ENCODE measurements at regions of chr2 and their contacts with region 1.

Region 1: DNA sequence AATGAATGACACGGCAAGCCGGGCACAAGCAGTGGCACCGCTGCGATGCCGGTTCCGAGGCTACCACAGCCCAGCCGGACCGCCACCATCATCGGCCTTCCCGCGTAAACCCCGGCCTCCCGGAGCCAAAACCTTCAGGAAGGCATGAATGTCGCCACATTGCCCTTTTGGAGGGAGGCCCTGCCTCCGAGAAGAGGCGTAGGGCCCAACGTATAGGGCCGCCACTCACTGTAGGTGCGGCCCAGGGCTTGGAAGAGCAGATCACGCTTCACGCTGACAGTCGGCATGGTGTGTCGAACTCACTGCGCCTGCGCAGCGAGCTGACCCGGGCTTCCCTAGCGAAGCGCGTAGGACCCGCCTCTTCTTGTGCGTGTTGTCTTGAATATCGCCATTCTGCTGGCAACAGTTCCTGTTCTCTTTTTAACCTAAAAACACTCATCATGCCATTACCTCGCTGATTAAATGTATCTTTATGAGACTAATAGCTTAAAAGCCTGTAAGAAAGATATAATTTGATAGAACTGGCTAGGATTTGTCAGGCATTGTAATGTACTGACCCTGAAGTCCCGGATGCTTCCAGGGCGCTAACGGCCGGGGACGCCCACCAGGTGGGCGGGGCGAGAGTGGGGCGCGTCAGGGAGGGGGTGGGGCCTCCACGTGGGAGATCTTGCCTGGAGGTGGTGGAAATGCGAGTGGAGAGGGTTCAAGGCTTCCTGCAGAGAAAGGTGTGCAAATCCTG is at the start of gene FARSB:
- DNase-seq: peak; percentile 96
- ATAC-seq: peak; percentile 92
- H3K4me3 Mint-ChIP-seq: peak within 1 kb of the TSS; percentile 97
- H3K27ac Mint-ChIP-seq: peak within 1 kb of the TSS; percentile 95
- H3K4me1 Mint-ChIP-seq: peaks cover 38% of the 10 kb centered on the region
- H3K27me3 Mint-ChIP-seq: no peaks in the 10 kb centered on the region
- total RNA-seq, gene FARSB: 56.3 to 58.5 TPM

Region 2: DNA sequence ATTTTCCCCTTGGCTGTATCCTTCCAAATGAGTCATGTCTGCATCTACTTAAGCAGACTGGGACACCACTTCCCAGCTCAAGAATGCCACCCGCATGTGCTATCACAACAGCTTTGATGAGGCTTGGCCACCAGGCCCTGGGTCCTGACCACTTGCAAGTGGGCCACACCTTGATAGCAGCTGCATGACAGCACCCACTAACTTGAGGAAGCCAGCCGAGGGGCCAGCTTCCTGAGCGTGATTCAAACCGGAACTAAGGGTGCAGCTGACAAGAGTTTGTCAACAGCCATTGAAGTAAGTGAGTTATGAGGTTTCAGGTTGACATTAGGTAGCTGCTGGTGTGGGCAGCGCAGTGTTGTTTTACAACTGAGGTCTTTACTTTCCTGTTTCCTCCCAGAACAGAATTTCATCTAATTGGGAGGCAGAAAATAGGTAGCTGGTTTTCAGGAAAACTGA is 1138.2 kb before region 1 on chr2:
- CTCF ChIA-PET with region 1: no interaction called
- POLR2A ChIA-PET with region 1: no interaction called
- intact Hi-C with region 1: loop called in 1 of 2 experiments (anchors 5 kb)
- DNase-seq: peak; percentile 84
- ATAC-seq: peak; percentile 86
- H3K4me3 Mint-ChIP-seq: no peak overlapping the region
- H3K27ac Mint-ChIP-seq: no peak overlapping the region
- H3K4me1 Mint-ChIP-seq: peaks cover 13% of the 10 kb centered on the region
- H3K27me3 Mint-ChIP-seq: no peaks in the 10 kb centered on the region

Region 3: DNA sequence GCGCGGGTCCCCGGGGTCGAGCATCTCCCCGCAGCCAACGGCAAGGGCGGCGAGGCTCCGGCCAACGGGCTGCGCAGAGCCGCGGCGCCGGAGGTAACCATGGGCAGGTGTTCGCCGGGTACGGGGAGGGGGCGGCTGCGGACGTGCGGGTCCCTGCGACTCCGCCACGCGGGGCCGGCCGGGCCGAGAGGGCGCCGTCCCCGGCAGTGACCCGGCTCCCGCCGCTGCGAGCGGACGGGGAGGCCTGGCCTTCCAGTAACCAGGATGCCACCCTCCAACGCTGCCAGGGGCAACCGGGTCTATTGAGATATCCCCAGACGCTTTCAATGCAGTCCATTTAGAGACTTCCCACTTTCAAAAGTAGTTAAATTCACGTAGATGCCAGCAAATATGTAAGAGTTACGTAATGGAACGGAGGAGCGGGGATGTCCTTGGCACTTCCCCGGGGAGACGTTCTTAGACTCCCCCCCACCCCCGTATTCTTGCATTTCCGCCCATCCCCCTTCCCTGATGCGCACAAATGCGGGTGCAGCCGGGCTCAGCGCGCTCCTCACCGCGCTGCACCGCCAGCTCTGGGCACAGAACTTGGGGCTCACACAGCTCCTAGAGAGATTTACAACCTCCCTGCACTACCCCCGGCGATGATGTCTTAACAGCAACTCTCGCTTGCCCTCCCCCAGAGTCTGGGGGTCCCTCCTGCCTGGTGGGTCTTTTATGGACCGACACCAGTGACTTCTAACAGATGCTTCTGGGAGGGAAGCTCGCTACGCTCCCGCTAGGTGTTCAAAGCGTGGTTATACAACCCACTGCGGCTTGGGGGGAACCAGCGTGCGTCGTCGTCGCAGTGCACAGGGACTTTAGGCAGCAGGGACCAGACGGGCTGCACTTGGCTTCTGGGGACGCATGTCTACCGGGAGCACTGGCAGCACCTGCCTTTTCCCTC is 231.0 kb before region 1 on chr2:
- CTCF ChIA-PET with region 1: no interaction called
- POLR2A ChIA-PET with region 1: no interaction called
- intact Hi-C with region 1: loop called in 1 of 2 experiments (anchors 5 kb)
- DNase-seq: peak; percentile 62
- ATAC-seq: peak; percentile 27
- H3K4me3 Mint-ChIP-seq: peak overlapping the region; percentile 85
- H3K27ac Mint-ChIP-seq: peak overlapping the region; percentile 90
- H3K4me1 Mint-ChIP-seq: peaks cover 50% of the 10 kb centered on the region
- H3K27me3 Mint-ChIP-seq: peaks cover 42% of the 10 kb centered on the region

Region 4: DNA sequence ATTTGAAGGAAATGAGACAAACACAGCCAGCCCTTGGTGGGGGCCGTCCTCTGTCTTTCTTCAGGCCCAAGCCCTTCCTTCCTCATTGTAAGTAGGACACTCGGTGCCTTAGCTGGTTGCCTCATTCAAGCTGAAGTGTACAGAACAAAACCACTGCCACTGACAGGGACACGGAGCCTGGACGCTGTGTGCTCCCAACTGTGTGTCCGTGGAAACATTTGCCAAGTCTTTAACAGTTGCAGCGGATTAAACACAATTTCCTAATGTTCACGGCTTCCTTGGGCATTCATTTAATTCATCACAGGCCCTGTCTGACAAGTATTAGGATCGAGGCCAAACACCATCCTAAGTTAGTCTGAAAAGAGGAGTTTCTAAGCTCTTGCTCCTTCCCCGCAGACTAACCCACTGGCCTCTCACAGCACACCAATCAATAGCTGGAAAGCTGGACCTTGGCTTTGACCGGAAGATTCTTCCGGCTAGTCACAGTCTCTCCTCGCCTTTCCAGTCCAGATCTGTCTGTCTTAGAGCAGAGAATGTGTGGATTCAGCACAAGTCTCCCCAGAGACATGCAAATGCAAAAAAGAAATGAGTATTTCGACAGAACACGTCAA is 136.2 kb after region 1 on chr2:
- CTCF ChIA-PET with region 1: no interaction called
- POLR2A ChIA-PET with region 1: no interaction called
- intact Hi-C with region 1: loop called in 1 of 2 experiments (anchors 1 kb)
- DNase-seq: no peak
- ATAC-seq: no peak
- H3K4me3 Mint-ChIP-seq: no peak overlapping the region
- H3K27ac Mint-ChIP-seq: no peak overlapping the region
- H3K4me1 Mint-ChIP-seq: peaks cover 16% of the 10 kb centered on the region
- H3K27me3 Mint-ChIP-seq: no peaks in the 10 kb centered on the region

Region 5: GRCh38 chr2:223580951-223581350 is 925.0 kb after region 1 on chr2:
- CTCF ChIA-PET with region 1: no interaction called
- POLR2A ChIA-PET with region 1: interaction called, 12 read pairs
- intact Hi-C with region 1: no loop called
- DNase-seq: no peak
- ATAC-seq: no peak
- H3K4me3 Mint-ChIP-seq: no peak overlapping the region
- H3K27ac Mint-ChIP-seq: no peak overlapping the region
- H3K4me1 Mint-ChIP-seq: no peaks in the 10 kb centered on the region
- H3K27me3 Mint-ChIP-seq: peaks cover 5% of the 10 kb centered on the region

Region 6: DNA sequence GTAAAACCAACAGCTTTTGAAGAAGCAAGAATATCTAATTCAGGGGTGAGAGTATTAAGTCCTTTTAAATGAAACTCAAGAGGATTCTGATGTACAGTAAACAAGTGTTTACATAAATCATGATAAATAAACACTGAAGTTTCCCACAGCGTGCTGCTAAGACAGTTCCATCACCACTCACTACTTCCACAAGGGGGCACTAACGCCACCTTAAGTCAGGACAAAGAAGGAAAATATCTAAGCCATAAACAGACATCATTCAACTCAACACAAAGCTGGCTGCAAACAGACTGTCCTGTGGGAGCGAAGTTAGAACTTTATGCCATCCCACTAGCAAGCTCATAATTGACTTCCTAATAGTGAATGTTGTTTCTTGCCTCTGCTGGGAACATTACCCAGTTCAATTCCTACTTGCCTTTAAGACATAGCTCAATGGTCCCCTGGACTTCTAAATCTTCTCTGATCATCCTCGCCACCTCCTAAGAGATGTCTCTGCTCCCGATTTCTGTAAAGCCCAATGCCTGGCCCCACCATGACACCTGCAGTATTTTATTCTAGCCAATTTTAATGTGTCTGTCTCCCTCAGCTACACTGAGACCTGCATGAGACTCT is 1337.8 kb after region 1 on chr2:
- CTCF ChIA-PET with region 1: no interaction called
- POLR2A ChIA-PET with region 1: no interaction called
- intact Hi-C with region 1: no loop called
- DNase-seq: peak; percentile 78
- ATAC-seq: peak; percentile 64
- H3K4me3 Mint-ChIP-seq: no peak overlapping the region
- H3K27ac Mint-ChIP-seq: peak overlapping the region; percentile 56
- H3K4me1 Mint-ChIP-seq: peaks cover 19% of the 10 kb centered on the region
- H3K27me3 Mint-ChIP-seq: no peaks in the 10 kb centered on the region

Region 7: GRCh38 chr2:224576088-224576715 is 1920.2 kb after region 1 on chr2:
- CTCF ChIA-PET with region 1: no interaction called
- POLR2A ChIA-PET with region 1: no interaction called
- intact Hi-C with region 1: loop called in 1 of 2 experiments (anchors 10 kb)
- DNase-seq: no peak
- ATAC-seq: peak; percentile 60
- H3K4me3 Mint-ChIP-seq: no peak overlapping the region
- H3K27ac Mint-ChIP-seq: peak overlapping the region; percentile 48
- H3K4me1 Mint-ChIP-seq: peaks cover 85% of the 10 kb centered on the region
- H3K27me3 Mint-ChIP-seq: no peaks in the 10 kb centered on the region